ENCODE measurements at regions of chr22 and their contacts with region 1.

Region 1: GRCh38 chr22:38201710-38202436 is at the start of gene MAFF:
- DNase-seq: peak; percentile 80
- H3K4me3 Mint-ChIP-seq: peak within 1 kb of the TSS; percentile 89
- H3K27ac Mint-ChIP-seq: peak within 1 kb of the TSS; percentile 82
- H3K4me1 Mint-ChIP-seq: peaks cover 42% of the 10 kb centered on the region
- H3K27me3 Mint-ChIP-seq: peaks cover 3% of the 10 kb centered on the region
- total RNA-seq, gene MAFF: 12.3 and 12.5 TPM in 2 replicates

Region 2: DNA sequence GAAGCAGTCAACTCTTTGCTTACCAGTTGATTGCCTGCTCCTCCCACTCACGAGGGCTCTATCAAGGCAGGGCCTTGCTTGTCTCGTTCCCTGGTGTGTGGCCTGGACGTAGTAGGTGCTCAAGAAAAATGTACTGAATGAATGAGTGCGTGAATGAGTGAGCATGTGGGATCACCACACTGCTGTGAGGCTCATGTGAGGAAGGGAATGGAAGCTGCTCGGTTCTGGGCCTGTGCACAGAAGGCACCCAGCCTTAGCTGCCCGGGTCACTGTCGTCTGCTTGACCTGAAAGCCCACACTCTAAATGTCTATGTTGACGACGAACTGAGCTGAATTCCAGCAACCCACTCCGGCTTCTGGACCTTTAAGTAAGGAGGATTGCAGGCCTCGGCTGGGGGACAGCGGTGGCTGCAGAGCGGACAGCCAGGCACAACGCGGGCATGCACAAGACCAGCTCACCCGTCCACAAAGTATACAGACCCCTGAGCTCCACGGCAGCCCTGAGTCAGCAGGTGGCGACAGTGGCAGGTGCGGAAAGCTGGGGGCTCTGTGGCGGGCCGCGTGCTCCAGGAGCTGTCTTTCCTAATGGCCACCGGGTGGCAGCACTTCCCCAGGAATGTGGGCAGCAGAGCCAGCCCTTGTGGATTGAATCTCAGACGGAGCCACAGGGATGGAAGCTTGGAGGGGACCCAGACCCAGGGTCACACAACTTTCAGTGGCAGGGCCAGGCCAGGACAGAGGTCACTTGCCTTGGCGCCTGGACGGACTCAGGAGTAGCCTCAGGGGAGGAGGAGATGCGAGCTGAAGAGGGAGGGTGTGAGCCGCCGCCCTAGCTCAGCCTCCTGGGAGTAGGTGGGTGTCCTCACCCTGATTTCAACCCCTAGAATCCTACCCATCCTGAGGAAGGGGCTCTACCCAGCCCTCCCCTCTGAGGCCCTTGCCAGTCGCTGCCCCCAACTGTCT is 149.7 kb before region 1 on chr22:
- intact Hi-C with region 1: loop called (anchors 1 kb)
- DNase-seq: peak; percentile 59
- H3K4me3 Mint-ChIP-seq: no peak overlapping the region
- H3K27ac Mint-ChIP-seq: no peak overlapping the region
- H3K4me1 Mint-ChIP-seq: peaks cover 13% of the 10 kb centered on the region
- H3K27me3 Mint-ChIP-seq: peaks cover 8% of the 10 kb centered on the region

Region 3: DNA sequence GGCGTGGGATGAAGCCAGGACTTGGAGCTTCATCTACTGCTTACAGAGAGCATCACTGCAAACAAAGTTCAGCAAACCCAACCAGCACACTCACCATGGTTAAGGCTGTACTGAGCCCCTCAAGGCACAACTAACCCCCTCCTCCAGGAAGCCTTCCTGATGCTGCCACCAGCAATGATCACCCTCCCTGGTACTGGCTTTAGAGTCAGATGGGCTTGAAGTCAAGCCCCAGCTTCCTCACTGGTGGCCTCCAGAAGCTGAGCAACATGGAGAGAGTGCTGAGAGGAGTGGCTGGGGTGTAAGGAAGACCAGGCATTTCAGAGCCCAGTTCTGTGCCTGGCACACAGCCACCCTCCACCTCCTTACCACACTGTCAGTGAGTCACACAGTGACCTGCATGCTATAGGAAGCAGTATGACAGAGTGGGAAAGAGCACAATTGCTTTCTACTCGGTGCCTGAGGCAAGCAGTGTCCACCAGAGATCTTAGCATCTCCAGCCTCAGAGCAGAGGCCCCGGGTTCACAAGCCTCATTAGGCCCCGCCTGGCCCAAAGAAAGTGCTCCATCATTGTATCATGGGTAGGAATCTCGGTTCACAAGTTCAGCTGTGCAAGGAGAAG is 66.6 kb before region 1 on chr22:
- intact Hi-C with region 1: no loop called
- DNase-seq: no peak
- H3K4me3 Mint-ChIP-seq: no peak overlapping the region
- H3K27ac Mint-ChIP-seq: no peak overlapping the region
- H3K4me1 Mint-ChIP-seq: no peaks in the 10 kb centered on the region
- H3K27me3 Mint-ChIP-seq: no peaks in the 10 kb centered on the region

Region 4: DNA sequence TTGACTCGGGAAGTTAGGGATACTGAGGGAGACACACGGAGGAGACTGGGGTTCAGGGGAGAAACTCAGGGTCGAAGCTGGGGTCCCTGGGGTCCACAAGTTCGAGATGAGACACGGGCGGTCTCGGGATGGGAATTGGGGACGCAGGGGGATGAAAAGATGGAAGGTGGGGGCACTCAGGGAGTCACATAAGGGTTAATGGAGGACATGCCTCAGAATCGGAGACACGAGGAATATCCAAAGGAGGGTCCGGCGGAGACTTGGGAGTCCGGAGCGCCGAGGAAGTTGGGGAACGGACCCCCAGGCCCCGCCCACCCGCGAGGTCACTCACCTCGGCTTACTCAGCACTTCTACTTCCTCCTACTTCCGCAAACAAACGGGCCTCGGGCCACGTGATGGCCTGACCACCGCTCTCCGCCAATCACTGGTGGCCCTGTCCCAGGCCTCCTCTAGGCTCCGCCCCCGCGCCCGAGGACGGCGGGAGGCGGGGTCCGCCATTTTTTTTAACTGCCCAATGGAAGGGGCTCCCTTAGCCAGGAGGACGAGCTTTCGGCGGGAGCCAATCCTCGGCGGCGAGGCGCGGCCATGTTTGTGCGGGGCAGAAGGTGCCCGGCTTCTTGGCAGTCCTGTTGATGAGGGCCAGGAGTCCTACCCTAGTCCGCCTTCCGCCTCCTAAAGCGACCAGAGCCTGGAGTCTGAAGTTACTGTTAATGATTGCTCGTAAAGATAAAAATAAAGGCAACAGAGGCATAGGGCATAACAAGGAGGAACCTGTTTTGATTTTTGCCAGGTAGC is 20.2 kb before region 1 on chr22 and contains the start of gene PLA2G6:
- intact Hi-C with region 1: loop called (anchors 1 kb)
- DNase-seq: peak; percentile 99
- H3K4me3 Mint-ChIP-seq: peak within 1 kb of the TSS; percentile 89
- H3K27ac Mint-ChIP-seq: peak within 1 kb of the TSS; percentile 95
- H3K4me1 Mint-ChIP-seq: peaks cover 48% of the 10 kb centered on the region
- H3K27me3 Mint-ChIP-seq: peaks cover 10% of the 10 kb centered on the region
- total RNA-seq, gene PLA2G6: 34.8 and 34.9 TPM in 2 replicates

Region 5: GRCh38 chr22:38228326-38228872 is 26.5 kb after region 1 on chr22:
- intact Hi-C with region 1: no loop called
- DNase-seq: no peak
- H3K4me3 Mint-ChIP-seq: no peak overlapping the region
- H3K27ac Mint-ChIP-seq: no peak overlapping the region
- H3K4me1 Mint-ChIP-seq: peaks cover 7% of the 10 kb centered on the region
- H3K27me3 Mint-ChIP-seq: no peaks in the 10 kb centered on the region

Region 6: GRCh38 chr22:38272373-38273134 is 70.7 kb after region 1 on chr22 and contains the start of gene TMEM184B:
- intact Hi-C with region 1: loop called (anchors 5 kb)
- DNase-seq: peak; percentile 82
- H3K4me3 Mint-ChIP-seq: peak within 1 kb of the TSS; percentile 87
- H3K27ac Mint-ChIP-seq: peak within 1 kb of the TSS; percentile 87
- H3K4me1 Mint-ChIP-seq: peaks cover 45% of the 10 kb centered on the region
- H3K27me3 Mint-ChIP-seq: peaks cover 11% of the 10 kb centered on the region
- total RNA-seq, gene TMEM184B: 36.6 and 39.1 TPM in 2 replicates

Region 7: GRCh38 chr22:38755911-38756532 is 554.1 kb after region 1 on chr22 and contains the start of gene SUN2:
- intact Hi-C with region 1: loop called (anchors 5 kb)
- DNase-seq: peak; percentile 94
- H3K4me3 Mint-ChIP-seq: peak within 1 kb of the TSS; percentile 95
- H3K27ac Mint-ChIP-seq: peak within 1 kb of the TSS; percentile 97
- H3K4me1 Mint-ChIP-seq: peaks cover 59% of the 10 kb centered on the region
- H3K27me3 Mint-ChIP-seq: no peaks in the 10 kb centered on the region
- total RNA-seq, gene SUN2: 146 and 154 TPM in 2 replicates

Measured in activated T-helper 1 cell treated with anti-CD3 and anti-CD28 coated beads, Interleukin-12 subunit alpha, Interleukin-12 subunit beta, Interleukin-2, Interleukin-4 antibody, amounts not matched to agents 30 ng/mL and 10 ng/mL and 1 ng/mL, durations not matched to agents 14 hours and 24 hours and 36 hours (primary cell).